CD8-positive, alpha-beta T cell (primary cell): ENCODE measurements at regions of chr14 and their contacts with region 1.

Region 1: DNA sequence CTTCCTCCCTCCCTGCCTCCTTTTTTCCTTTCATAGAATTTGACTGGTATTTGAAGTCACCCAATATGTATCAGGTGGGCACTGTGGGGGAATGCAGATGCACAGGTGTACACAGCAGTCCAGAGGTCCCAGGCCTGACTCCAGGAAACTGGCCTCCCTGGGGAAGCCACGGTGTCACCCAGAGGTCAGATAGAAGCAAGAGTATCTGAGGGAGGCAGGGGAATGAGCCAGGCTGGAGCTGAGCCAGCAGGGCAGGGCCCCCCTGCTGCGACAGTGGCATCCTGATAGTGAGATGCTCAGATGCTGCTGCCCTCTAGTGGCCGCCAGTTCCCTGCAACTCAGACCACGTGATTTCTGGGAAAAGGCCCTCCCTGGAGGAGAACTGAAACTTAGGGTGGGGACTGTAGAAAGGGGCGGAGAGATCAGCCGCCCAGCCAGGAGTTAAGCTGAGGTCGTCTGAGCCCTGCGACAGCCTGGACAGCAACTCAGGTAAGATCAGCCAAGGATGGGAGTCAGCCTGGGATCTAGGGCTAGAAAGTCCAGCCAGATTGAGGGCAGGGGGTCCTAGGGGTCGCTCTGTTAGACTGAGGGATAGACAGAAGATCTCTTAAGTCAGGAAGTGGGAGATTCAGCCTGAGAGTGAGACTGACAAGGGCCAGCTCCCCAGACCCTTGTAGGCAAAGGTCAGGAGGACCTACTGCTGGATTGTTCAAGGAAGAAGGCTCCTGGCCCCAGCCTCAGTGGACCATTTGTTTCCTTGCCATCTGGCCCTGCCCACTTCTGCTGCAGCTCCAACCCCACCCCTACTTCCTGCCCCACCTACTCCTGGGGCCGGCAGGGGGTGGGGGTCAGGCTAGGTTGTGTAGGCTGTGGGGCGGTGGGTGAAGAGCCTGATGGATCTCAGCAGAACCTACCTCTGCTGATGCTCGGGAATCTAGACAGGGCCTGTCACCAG is at the start of gene IRF9:
- DNase-seq: peak; percentile 95 to 99 (median 97)
- ATAC-seq: peak; percentile 85
- H3K4me3 ChIP-seq: peak within 1 kb of the TSS; percentile 80 to 90
- H3K4me3 Mint-ChIP-seq: peak within 1 kb of the TSS; percentile 99
- H3K27ac ChIP-seq: peak within 1 kb of the TSS; percentile 92 to 94
- H3K27ac Mint-ChIP-seq: peak within 1 kb of the TSS; percentile 99
- H3K4me1 ChIP-seq: peaks cover 47% of the 10 kb centered on the region
- H3K4me1 Mint-ChIP-seq: peaks cover 49% of the 10 kb centered on the region
- H3K27me3 ChIP-seq: no peaks in the 10 kb centered on the region
- H3K27me3 Mint-ChIP-seq: no peaks in the 10 kb centered on the region
- CTCF ChIP-seq: peak; percentile 92
- total RNA-seq, gene IRF9: 270 to 307 TPM

Region 2: GRCh38 chr14:24058260-24058950 is 102.7 kb before region 1 on chr14:
- CTCF ChIA-PET with region 1: interaction called, 44 read pairs
- POLR2A ChIA-PET with region 1: no interaction called
- intact Hi-C with region 1: loop called (anchors 1 kb)
- DNase-seq: peak in 4 of 9 experiments; percentile 25 to 71 (median 58)
- ATAC-seq: peak; percentile 86
- H3K4me3 ChIP-seq: no peak overlapping the region
- H3K4me3 Mint-ChIP-seq: no peak overlapping the region
- H3K27ac ChIP-seq: no peak overlapping the region
- H3K27ac Mint-ChIP-seq: peak overlapping the region; percentile 53
- H3K4me1 ChIP-seq: no peaks in the 10 kb centered on the region
- H3K4me1 Mint-ChIP-seq: peaks cover 3% of the 10 kb centered on the region
- H3K27me3 ChIP-seq: no peaks in the 10 kb centered on the region
- H3K27me3 Mint-ChIP-seq: peaks cover 3% of the 10 kb centered on the region
- CTCF ChIP-seq: peak; percentile 94

Region 3: DNA sequence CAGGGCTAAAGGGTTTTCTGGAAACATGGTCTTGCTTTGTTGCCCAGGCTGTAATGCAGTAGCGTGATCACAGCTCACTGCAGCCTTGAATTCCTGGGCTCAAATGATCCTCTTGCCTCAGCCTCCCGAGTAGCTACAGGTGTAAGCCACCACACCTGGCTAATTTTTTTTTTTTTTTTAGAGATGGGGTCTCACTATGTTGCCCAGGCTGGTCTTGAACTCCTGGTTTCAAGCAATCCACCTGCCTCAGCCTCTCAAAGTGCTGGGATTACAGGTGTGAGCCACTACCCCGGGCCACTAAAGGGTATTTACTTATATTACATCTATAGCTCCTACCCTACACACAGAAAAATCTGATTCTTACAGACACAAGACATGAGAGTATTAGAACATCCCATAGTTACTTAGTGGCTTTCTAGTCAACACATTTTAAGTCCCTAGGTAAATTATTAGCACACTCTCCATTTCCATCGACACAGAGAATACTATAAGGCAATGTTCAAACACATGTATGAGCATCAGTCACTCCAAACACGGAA is 52.7 kb before region 1 on chr14:
- CTCF ChIA-PET with region 1: interaction called, 55 read pairs
- POLR2A ChIA-PET with region 1: interaction called, 30 read pairs
- intact Hi-C with region 1: loop called in 1 of 2 experiments (anchors 1 kb)
- DNase-seq: no peak
- ATAC-seq: peak; percentile 25
- H3K4me3 ChIP-seq: no peak overlapping the region
- H3K4me3 Mint-ChIP-seq: no peak overlapping the region
- H3K27ac ChIP-seq: peak overlapping the region; percentile 44 to 80
- H3K27ac Mint-ChIP-seq: peak overlapping the region; percentile 95
- H3K4me1 ChIP-seq: peaks cover 16% of the 10 kb centered on the region
- H3K4me1 Mint-ChIP-seq: peaks cover 12% of the 10 kb centered on the region
- H3K27me3 ChIP-seq: no peaks in the 10 kb centered on the region
- H3K27me3 Mint-ChIP-seq: no peaks in the 10 kb centered on the region
- CTCF ChIP-seq: no peak

Region 4: GRCh38 chr14:24141097-24141880 is 19.8 kb before region 1 on chr14 and contains the start of gene EMC9:
- CTCF ChIA-PET with region 1: interaction called, 53 read pairs
- POLR2A ChIA-PET with region 1: interaction called, 30 read pairs
- intact Hi-C with region 1: loop called (anchors 1 kb)
- DNase-seq: peak; percentile 98 to 100 (median 99)
- ATAC-seq: peak; percentile 90
- H3K4me3 ChIP-seq: peak within 1 kb of the TSS; percentile 81 to 89
- H3K4me3 Mint-ChIP-seq: peak within 1 kb of the TSS; percentile 86
- H3K27ac ChIP-seq: peak within 1 kb of the TSS; percentile 49 to 74
- H3K27ac Mint-ChIP-seq: peak within 1 kb of the TSS; percentile 84
- H3K4me1 ChIP-seq: peaks cover 51% of the 10 kb centered on the region
- H3K4me1 Mint-ChIP-seq: peaks cover 73% of the 10 kb centered on the region
- H3K27me3 ChIP-seq: no peaks in the 10 kb centered on the region
- H3K27me3 Mint-ChIP-seq: no peaks in the 10 kb centered on the region
- CTCF ChIP-seq: no peak
- total RNA-seq, gene EMC9: 7.8 to 10.4 TPM

Region 5: GRCh38 chr14:24171422-24172260 is 10.5 kb after region 1 on chr14 and contains the start of gene REC8:
- CTCF ChIA-PET with region 1: interaction called, 13 read pairs
- POLR2A ChIA-PET with region 1: interaction called, 11 read pairs
- intact Hi-C with region 1: loop called in 1 of 2 experiments (anchors 1 kb)
- DNase-seq: peak; percentile 62 to 92 (median 81)
- ATAC-seq: peak; percentile 87
- H3K4me3 ChIP-seq: peak within 1 kb of the TSS; percentile 53 to 60
- H3K4me3 Mint-ChIP-seq: peak within 1 kb of the TSS; percentile 88
- H3K27ac ChIP-seq: peak within 1 kb of the TSS; percentile 17 to 64
- H3K27ac Mint-ChIP-seq: peak within 1 kb of the TSS; percentile 84
- H3K4me1 ChIP-seq: peaks cover 15% of the 10 kb centered on the region
- H3K4me1 Mint-ChIP-seq: peaks cover 26% of the 10 kb centered on the region
- H3K27me3 ChIP-seq: no peaks in the 10 kb centered on the region
- H3K27me3 Mint-ChIP-seq: no peaks in the 10 kb centered on the region
- CTCF ChIP-seq: no peak
- total RNA-seq, gene REC8: 131 to 144 TPM

Region 6: GRCh38 chr14:24188251-24189058 is 27.3 kb after region 1 on chr14 and contains the start of gene IPO4:
- CTCF ChIA-PET with region 1: interaction called, 27 read pairs
- POLR2A ChIA-PET with region 1: interaction called, 9 read pairs
- intact Hi-C with region 1: loop called (anchors 1 kb)
- DNase-seq: peak; percentile 86 to 99 (median 94)
- ATAC-seq: peak; percentile 91
- H3K4me3 ChIP-seq: peak within 1 kb of the TSS; percentile 77 to 82
- H3K4me3 Mint-ChIP-seq: peak within 1 kb of the TSS; percentile 89
- H3K27ac ChIP-seq: peak within 1 kb of the TSS; percentile 61 to 89
- H3K27ac Mint-ChIP-seq: peak within 1 kb of the TSS; percentile 87
- H3K4me1 ChIP-seq: peaks cover 17% of the 10 kb centered on the region
- H3K4me1 Mint-ChIP-seq: peaks cover 38% of the 10 kb centered on the region
- H3K27me3 ChIP-seq: no peaks in the 10 kb centered on the region
- H3K27me3 Mint-ChIP-seq: no peaks in the 10 kb centered on the region
- CTCF ChIP-seq: no peak
- total RNA-seq, gene IPO4: 69.2 to 75.6 TPM

Region 7: DNA sequence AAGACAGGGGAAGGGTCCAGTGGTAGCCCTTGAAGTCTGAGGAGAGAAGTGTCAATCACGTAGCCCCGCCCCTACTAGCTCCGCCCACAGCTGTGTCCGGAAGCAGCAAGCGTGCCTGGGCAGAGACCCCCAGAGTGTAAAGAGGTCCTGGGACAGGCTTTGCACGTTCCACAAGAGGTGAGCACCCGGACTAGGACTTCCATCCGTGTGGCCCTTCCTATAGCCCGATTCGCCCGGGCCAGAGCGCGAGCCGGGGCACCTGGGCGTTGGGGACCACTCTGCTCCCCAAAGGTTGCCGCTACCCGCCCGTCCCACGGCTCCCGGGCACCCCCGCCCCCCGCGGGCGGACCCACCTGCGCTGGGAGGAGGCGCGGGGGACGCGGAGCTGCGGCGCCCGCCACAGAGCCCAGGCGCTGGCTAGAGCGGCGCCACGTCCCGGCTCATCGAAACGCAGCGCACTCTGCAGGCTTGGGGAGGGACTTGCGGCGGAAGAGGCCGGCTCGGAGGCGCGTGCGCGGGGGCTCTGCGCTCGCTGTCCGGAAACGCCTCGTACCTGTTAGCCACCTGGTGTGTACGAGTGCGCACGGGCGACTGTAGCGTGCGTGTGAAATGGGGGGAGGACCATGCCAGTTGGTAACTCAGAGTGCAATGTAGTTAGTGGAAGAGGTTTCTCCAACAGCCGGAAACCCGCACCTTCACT is 110.2 kb after region 1 on chr14 and contains the start of gene RABGGTA:
- CTCF ChIA-PET with region 1: interaction called, 3 read pairs
- POLR2A ChIA-PET with region 1: interaction called, 3 read pairs
- intact Hi-C with region 1: loop called in 1 of 2 experiments (anchors 5 kb)
- DNase-seq: peak; percentile 85 to 99 (median 91)
- ATAC-seq: peak; percentile 84
- H3K4me3 ChIP-seq: peak within 1 kb of the TSS; percentile 81 to 90
- H3K4me3 Mint-ChIP-seq: peak within 1 kb of the TSS; percentile 91
- H3K27ac ChIP-seq: peak within 1 kb of the TSS; percentile 93 to 97
- H3K27ac Mint-ChIP-seq: peak within 1 kb of the TSS; percentile 98
- H3K4me1 ChIP-seq: peaks cover 31% of the 10 kb centered on the region
- H3K4me1 Mint-ChIP-seq: peaks cover 36% of the 10 kb centered on the region
- H3K27me3 ChIP-seq: no peaks in the 10 kb centered on the region
- H3K27me3 Mint-ChIP-seq: no peaks in the 10 kb centered on the region
- CTCF ChIP-seq: peak; percentile 50
- total RNA-seq, gene RABGGTA: 59.1 to 65.9 TPM